ENCODE measurements at regions of chr9 and their contacts with region 1.

Region 1: DNA sequence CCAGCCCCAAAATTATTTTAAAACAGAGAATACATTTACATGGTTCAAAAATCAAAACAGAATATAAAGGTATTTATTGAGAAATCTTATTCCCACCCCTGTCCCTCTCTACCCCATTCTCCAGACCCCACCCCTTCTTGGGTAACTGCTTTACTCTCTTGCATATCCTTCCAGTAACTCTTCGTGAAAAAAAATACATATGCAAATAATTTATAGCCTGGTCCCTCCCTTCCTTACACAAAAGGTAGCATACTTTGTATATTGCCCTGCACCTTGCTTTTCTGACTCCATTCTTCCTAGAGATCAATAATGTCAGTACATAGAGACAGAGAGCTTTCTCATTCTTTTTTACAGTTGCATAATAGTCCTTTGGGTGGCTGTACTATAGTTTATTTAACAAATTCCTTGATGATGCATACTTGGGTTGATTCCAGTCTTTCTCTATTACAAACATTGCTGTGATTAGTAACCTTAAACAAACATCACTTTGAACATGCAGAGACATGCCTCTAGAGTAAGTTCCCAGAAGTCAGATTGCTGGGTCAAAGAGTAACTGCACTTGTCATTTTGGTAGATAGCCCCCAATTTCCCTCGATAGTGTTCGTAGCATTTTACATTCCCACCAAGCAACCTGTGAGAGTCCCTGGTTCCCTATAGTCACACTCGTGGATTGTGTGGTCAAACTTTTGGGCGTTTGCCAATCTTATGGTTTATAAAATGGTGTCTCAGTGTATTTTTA is 47.8 kb downstream of the STOM start:
- DNase-seq: no peak
- ATAC-seq: peak; percentile 37
- H3K4me3 Mint-ChIP-seq: no peak overlapping the region
- H3K27ac Mint-ChIP-seq: no peak overlapping the region
- H3K4me1 Mint-ChIP-seq: peaks cover 12% of the 10 kb centered on the region
- H3K27me3 Mint-ChIP-seq: no peaks in the 10 kb centered on the region

Region 2: GRCh38 chr9:121213136-121213806 is 108.9 kb before region 1 on chr9:
- CTCF ChIA-PET with region 1: interaction called, 40 read pairs
- POLR2A ChIA-PET with region 1: no interaction called
- intact Hi-C with region 1: loop called in 1 of 2 experiments (anchors 1 kb)
- DNase-seq: peak; percentile 87
- ATAC-seq: peak; percentile 89
- H3K4me3 Mint-ChIP-seq: no peak overlapping the region
- H3K27ac Mint-ChIP-seq: no peak overlapping the region
- H3K4me1 Mint-ChIP-seq: peaks cover 7% of the 10 kb centered on the region
- H3K27me3 Mint-ChIP-seq: no peaks in the 10 kb centered on the region

Region 3: GRCh38 chr9:121308765-121309164 is 13.4 kb before region 1 on chr9:
- CTCF ChIA-PET with region 1: interaction called, 13 read pairs
- POLR2A ChIA-PET with region 1: no interaction called
- intact Hi-C with region 1: no loop called
- DNase-seq: no peak
- ATAC-seq: no peak
- H3K4me3 Mint-ChIP-seq: no peak overlapping the region
- H3K27ac Mint-ChIP-seq: no peak overlapping the region
- H3K4me1 Mint-ChIP-seq: no peaks in the 10 kb centered on the region
- H3K27me3 Mint-ChIP-seq: no peaks in the 10 kb centered on the region

Region 4: DNA sequence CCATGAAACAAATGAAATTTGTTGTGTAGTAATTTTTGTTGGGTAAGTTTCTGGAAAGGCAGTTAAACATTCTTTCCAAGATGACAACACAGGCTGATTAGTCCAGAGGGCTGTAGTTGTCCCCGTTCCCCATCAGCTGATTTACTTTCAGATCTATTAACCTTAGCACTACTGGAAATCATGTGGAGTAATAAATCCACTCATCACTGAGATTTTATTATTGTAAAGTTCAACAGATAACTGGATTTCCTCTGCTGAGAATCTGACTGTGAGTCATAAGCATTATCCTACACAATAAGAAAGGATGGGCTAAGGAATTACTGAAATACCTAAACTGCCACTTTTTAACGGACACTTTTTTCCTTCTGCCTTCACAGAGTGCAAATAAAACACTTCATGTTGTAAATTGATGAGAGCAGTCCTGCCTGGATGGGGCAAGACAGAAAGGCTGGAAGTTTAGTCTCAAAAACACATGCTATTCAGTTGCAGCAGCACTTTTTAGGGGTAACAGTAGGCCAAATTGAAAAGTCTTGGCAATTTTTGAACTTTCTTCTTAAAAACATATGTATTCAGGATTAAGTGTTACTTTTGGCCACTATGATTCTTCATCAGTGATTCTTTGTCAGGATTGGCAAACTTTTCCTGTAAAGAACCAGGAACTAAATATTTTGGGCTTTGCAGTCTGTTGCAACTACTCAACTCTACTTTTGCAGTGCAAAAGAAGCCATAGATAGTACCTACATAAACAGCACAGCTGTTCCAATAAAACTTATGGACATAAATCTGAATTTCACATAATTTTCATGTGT is 40.8 kb after region 1 on chr9:
- CTCF ChIA-PET with region 1: interaction called, 19 read pairs
- POLR2A ChIA-PET with region 1: no interaction called
- intact Hi-C with region 1: no loop called
- DNase-seq: no peak
- ATAC-seq: no peak
- H3K4me3 Mint-ChIP-seq: no peak overlapping the region
- H3K27ac Mint-ChIP-seq: no peak overlapping the region
- H3K4me1 Mint-ChIP-seq: peaks cover 39% of the 10 kb centered on the region
- H3K27me3 Mint-ChIP-seq: no peaks in the 10 kb centered on the region

Region 5: GRCh38 chr9:121376214-121376830 is 54.1 kb after region 1 on chr9:
- CTCF ChIA-PET with region 1: interaction called, 22 read pairs
- POLR2A ChIA-PET with region 1: no interaction called
- intact Hi-C with region 1: loop called (anchors 1 kb)
- DNase-seq: no peak
- ATAC-seq: no peak
- H3K4me3 Mint-ChIP-seq: no peak overlapping the region
- H3K27ac Mint-ChIP-seq: no peak overlapping the region
- H3K4me1 Mint-ChIP-seq: no peaks in the 10 kb centered on the region
- H3K27me3 Mint-ChIP-seq: no peaks in the 10 kb centered on the region

Region 6: DNA sequence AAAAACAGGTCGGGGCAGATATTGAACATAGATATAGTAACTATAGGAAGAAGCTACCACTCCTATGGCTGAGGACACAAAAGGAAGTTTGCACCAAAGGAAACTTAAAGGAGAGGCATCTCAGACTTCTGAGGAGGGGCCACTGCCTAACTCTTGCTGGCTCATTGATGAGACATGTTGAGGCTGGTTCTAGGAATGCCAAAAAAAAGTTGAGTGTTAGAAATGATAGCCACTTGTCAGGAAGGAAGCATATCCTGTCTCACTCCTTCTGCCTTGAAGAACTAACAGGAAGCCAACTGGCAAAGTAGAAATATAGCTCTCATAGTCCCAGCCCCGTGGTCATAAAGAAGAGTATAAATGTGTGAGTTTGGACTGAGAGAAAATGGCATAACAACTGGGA is 71.1 kb after region 1 on chr9:
- CTCF ChIA-PET with region 1: interaction called, 276 read pairs
- POLR2A ChIA-PET with region 1: no interaction called
- intact Hi-C with region 1: no loop called
- DNase-seq: no peak
- ATAC-seq: no peak
- H3K4me3 Mint-ChIP-seq: no peak overlapping the region
- H3K27ac Mint-ChIP-seq: no peak overlapping the region
- H3K4me1 Mint-ChIP-seq: peaks cover 7% of the 10 kb centered on the region
- H3K27me3 Mint-ChIP-seq: no peaks in the 10 kb centered on the region

Region 7: GRCh38 chr9:121498150-121498486 is 175.9 kb after region 1 on chr9:
- CTCF ChIA-PET with region 1: interaction called, 6 read pairs
- POLR2A ChIA-PET with region 1: no interaction called
- intact Hi-C with region 1: loop called (anchors 1 to 5 kb)
- DNase-seq: peak; percentile 66
- ATAC-seq: peak; percentile 82
- H3K4me3 Mint-ChIP-seq: peak overlapping the region; percentile 53
- H3K27ac Mint-ChIP-seq: no peak overlapping the region
- H3K4me1 Mint-ChIP-seq: peaks cover 17% of the 10 kb centered on the region
- H3K27me3 Mint-ChIP-seq: peaks cover 53% of the 10 kb centered on the region

Region 8: DNA sequence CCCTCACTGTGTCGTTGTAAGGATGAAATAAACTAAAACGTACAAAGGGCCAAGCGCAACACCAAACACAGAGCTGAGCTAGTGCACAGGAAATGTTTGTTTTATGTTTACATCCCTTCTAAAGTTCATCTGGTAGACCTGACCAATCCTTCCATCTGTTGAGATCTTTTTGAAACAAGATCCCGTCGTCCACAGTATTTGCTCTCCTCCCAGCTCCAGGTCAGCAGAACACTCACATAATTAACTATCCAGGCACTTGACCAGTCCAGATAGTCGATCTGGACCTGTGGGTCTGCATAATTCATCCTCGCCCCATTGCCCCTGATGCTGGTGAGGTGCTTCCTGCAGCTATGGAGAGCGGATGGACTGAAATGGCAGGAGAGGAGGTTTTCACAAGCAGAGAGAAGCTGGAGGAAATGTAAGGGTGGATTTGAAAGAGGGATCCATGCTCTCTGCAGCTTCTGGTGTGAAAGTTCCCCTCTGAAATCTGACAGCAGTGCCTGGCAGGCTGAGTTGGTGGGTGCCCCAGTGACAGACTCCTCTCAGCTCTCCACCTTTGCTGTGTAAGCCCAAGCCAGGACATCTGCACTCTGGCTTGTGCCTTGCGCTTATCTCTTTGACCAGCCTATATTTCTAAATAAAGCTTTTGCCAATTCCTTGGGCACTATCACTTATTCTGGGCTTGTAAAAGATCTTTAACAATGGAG is 668.5 kb after region 1 on chr9:
- CTCF ChIA-PET with region 1: no interaction called
- POLR2A ChIA-PET with region 1: no interaction called
- intact Hi-C with region 1: no loop called
- DNase-seq: no peak
- ATAC-seq: no peak
- H3K4me3 Mint-ChIP-seq: no peak overlapping the region
- H3K27ac Mint-ChIP-seq: no peak overlapping the region
- H3K4me1 Mint-ChIP-seq: no peaks in the 10 kb centered on the region
- H3K27me3 Mint-ChIP-seq: no peaks in the 10 kb centered on the region